Transverse colon (tissue), 4 donors: ENCODE measurements at regions of chr7 and their contacts with region 1.

Region 1: DNA sequence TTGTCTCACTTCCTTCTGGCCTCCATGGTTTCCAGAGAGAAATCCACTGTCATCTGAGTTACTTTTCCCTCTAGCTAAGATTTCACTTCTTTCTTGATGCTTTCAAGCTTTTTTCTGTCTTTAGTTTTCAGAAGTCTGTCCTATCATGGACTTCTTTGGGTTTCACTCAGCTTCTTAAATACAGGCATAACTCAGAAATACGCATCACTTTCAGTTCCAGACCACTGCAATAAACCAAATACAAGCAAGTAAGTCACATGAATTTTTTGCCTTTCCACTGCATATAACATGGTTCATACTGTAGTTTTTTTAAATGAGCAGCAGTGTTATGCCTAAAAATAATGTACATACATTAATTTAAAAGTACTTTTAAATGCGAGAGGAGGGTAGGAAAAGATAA is 48.7 kb downstream of the STK17A start:
- DNase-seq: no peak
- H3K4me3 ChIP-seq: no peak overlapping the region
- H3K27ac ChIP-seq: no peak overlapping the region
- H3K4me1 ChIP-seq: peaks cover 0 to 6% (median 0%) of the 10 kb centered on the region in 4 donors
- H3K27me3 ChIP-seq: no peaks in the 10 kb centered on the region
- CTCF ChIP-seq: no peak
- EP300 ChIP-seq: no peak
- POLR2A ChIP-seq: no peak

Region 2: GRCh38 chr7:43405948-43406347 is 225.6 kb before region 1 on chr7:
- in situ Hi-C with region 1: no loop called
- intact Hi-C with region 1: no loop called
- DNase-seq: no peak
- H3K4me3 ChIP-seq: no peak overlapping the region
- H3K27ac ChIP-seq: no peak overlapping the region
- H3K4me1 ChIP-seq: no peaks in the 10 kb centered on the region
- H3K27me3 ChIP-seq: no peaks in the 10 kb centered on the region
- CTCF ChIP-seq: no peak
- EP300 ChIP-seq: no peak
- POLR2A ChIP-seq: no peak

Region 3: GRCh38 chr7:43535810-43536585 is 95.6 kb before region 1 on chr7:
- in situ Hi-C with region 1: no loop called
- intact Hi-C with region 1: no loop called
- DNase-seq: no peak
- H3K4me3 ChIP-seq: no peak overlapping the region
- H3K27ac ChIP-seq: no peak overlapping the region
- H3K4me1 ChIP-seq: no peaks in the 10 kb centered on the region
- H3K27me3 ChIP-seq: no peaks in the 10 kb centered on the region
- CTCF ChIP-seq: no peak
- EP300 ChIP-seq: no peak
- POLR2A ChIP-seq: no peak

Region 4: DNA sequence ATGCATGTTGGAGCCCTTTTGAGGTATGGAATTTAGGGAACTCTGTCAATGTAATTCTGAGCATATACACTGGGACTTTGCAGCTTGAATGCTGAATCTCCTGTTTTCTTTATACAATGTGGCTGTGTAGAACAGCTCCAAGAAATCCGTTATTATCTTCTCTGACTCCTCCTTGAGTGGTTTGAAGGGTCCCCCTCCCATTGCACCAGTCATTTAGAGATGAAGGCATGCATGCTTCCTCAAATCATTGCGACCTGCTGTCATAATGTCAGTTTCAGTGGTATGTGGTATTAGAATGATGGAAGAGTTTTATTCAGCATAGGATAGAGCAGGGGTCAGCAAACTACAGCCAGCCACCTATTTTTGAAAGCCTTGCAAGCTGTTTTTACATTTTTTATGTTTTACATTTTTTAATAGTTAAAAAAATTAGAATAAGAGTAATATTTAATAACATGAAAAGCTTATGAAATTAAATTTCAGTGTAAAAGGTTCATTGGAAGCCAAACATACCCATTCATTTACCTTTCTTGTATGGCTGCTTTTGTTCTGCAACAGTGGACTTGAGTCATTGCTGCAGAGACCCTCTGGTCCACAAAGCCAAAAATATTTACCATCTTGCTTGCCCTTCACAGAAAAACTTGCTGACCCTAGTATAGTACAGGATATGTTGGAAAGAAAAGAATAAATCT is 40.6 kb before region 1 on chr7:
- in situ Hi-C with region 1: loop called in 1 of 4 experiments (anchors 5 kb)
- intact Hi-C with region 1: no loop called
- DNase-seq: no peak
- H3K4me3 ChIP-seq: no peak overlapping the region
- H3K27ac ChIP-seq: peak overlapping the region; percentile 49 to 74 (median 64)
- H3K4me1 ChIP-seq: peaks cover 7 to 68% (median 49%) of the 10 kb centered on the region in 4 donors
- H3K27me3 ChIP-seq: no peaks in the 10 kb centered on the region
- CTCF ChIP-seq: no peak
- EP300 ChIP-seq: no peak
- POLR2A ChIP-seq: no peak

Region 5: DNA sequence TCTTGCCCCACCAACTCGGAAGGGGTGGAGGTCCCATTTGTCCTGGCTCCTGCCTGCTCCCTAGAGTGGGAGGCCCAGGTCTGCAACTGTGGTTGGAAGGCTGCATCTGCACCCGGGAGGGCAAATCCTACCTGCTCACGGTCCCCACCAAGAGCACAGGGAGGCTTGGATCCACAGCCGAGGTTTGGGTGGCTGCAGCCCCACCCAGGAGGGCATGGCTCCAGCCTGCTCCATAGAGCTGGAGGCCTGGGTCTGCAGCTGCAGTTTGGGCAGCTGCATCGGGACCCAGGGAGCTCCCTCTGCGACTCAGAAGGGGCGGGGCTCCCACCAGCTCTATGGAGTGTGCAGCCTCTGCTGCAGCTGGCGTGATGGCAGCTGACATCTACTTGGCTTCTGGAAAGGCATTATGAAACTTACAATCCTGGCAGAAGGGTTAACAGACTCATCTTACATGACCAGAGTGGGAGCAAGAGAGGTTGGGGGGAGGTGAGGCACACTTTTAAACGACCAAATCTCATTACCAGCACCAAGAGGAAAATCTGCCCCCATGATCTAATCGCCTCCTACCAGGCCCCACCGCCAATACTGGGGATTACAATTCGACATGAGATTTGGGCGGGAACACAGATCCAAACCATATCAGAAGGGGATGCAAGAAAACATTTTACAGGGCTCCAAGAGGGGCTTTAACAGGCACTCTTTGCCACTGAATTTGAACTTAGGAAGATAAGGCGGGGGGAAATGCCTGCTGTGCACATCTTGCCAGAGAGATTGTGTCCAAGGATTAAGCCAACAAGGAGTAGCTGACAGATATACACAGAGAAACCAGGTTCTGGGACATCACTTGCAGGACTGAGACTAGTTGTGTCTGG is 118.7 kb after region 1 on chr7:
- in situ Hi-C with region 1: no loop called
- intact Hi-C with region 1: no loop called
- DNase-seq: no peak
- H3K4me3 ChIP-seq: no peak overlapping the region
- H3K27ac ChIP-seq: no peak overlapping the region
- H3K4me1 ChIP-seq: no peaks in the 10 kb centered on the region
- H3K27me3 ChIP-seq: no peaks in the 10 kb centered on the region
- CTCF ChIP-seq: no peak
- EP300 ChIP-seq: no peak
- POLR2A ChIP-seq: no peak